ENCODE measurements at regions of chr17 and their contacts with region 1.

Region 1: DNA sequence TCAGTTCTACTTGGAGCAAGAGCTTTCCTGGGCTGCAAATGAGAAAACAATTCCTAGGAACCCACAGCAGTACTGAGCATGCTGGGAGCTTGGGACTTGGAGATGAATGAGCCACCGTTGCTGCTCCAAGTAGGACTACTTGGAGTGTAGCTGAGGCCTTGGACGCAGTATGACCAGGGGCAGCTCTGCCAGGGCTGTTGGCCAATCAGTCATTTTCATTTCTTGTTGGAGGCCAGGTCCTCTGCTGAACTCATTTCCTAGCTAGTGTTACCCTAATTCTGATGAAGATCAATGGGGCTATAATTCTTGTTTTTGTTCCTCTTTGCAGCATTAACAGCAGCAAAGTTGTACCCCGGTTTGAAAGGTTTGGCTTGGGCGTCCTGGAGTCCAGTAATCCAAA is 8.0 kb upstream of the LGALS9 start:
- DNase-seq: no peak
- ATAC-seq: no peak
- H3K4me3 ChIP-seq: no peak overlapping the region
- H3K27ac ChIP-seq: no peak overlapping the region
- H3K4me1 ChIP-seq: no peaks in the 10 kb centered on the region
- CTCF ChIP-seq: no peak
- EP300 ChIP-seq: no peak
- POLR2A ChIP-seq: no peak
- RAD21 ChIP-seq: no peak

Region 2: DNA sequence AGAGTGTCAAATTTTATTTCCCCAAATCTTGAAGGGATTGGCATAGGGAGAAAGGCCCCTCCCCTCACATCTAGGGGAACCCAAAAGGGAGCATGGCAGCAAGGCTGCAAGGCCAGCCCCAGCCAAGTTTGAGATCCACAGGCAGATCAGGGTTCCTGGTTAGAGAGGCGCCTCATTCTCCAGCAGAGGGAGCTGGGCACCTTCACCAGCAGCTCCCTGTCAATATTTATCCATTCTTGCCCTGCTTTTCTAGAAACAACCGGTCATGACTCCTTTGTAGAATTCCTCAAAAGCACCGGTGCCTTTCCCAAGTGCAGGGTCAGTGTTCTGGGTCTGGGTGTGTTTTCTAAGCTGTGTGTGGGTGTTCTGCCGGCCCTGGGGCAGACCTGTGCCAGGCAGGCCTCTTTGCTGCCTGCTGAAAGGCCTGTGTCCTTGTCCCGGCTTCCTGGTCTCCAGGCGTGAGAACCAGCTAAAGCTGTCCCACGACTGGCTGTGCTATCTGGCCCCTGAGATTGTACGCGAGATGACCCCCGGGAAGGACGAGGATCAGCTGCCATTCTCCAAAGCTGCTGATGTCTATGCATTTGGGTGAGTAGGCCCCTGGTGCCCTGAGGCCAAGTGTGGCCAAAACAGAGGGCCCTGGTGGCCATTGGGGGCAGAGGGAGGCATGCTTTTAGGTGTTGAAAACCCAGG is 13.2 kb before region 1 on chr17:
- CTCF ChIA-PET with region 1: interaction called, 160 read pairs
- POLR2A ChIA-PET with region 1: no interaction called
- DNase-seq: peak; percentile 46 to 53
- ATAC-seq: peak; percentile 82 to 88
- H3K4me3 ChIP-seq: no peak overlapping the region
- H3K27ac ChIP-seq: no peak overlapping the region
- H3K4me1 ChIP-seq: peaks cover 10% of the 10 kb centered on the region
- CTCF ChIP-seq: peak; percentile 44
- EP300 ChIP-seq: no peak
- POLR2A ChIP-seq: no peak
- RAD21 ChIP-seq: peak; percentile 46 to 70